ENCODE measurements at regions of chr5 and their contacts with region 1.

Region 1: DNA sequence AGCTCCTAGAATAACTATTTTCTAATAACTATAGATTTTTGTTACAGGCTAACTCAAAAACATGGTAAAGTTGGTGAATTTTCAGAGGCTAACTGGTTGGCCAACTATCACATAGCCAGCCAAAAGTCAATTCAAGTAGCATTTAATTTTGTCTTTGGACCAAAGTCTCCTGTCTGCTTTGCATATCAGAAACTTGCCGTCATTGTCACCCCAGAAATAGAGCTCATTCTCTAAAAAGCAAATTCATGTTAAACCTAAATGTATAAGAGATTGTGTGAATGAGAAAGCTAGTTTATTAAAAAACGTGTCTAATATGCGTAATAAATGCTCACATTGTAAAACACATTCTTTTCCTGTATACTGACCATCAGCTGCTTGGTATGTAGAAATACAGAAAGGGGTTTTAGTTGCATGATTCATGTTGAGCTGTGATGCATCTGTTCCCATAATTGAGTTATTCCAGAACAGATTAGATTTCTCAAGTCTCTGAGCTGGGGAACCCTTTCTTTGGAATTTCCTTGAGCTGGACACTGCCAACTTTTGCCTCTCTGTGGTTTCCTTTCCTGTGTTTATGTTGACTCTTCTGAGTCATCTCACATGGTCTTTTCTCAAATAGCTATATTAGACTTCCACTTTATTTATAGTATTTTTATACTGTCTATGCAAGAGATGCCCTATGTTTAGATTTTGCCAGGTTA is 7.3 kb downstream of the SRFBP1 start:
- DNase-seq: no peak
- ATAC-seq: peak; percentile 81 to 96

Region 2: DNA sequence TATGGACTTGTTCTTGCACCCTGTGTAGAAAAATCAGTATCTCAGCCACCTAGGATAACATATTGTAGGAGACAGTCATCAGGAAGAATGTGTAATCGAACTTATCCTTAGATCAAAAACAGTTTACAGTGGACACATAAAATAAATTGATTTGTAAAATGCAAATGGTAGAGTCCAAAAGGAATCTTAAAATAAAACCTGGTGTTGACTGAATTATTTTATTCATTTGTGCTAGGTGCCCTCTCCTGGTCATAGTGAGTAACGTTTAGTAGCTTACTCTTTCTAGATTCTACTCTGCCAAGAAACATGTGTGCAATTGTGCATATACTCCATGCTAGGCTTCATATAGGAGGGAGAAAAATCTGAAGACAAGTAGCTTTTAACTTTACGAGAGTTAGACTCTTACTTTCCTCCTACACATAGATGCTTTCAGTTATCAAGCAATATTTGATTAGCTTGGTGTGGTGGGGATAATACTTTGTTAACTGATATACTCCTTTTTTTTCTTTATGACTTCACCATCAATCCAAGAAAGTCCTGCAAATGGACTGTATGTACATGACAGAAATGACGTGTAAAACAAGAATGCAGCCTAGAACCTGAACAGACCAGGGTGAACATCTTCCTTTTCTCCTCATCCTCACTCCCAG is 132.7 kb after region 1 on chr5:
- intact Hi-C with region 1: loop called in 1 of 2 experiments (anchors 5 kb)
- DNase-seq: no peak
- ATAC-seq: peak; percentile 41 to 51

Region 3: GRCh38 chr5:122192497-122193496 is 223.7 kb after region 1 on chr5:
- intact Hi-C with region 1: loop called in 1 of 2 experiments (anchors 10 kb)
- DNase-seq: no peak
- ATAC-seq: peak; percentile 71 to 73